SK-N-SH (cell line): ENCODE measurements at regions of chr19 and their contacts with region 1.

Region 1: GRCh38 chr19:1672038-1672768 is 19.8 kb upstream of the TCF3 start:
- DNase-seq: peak; percentile 86
- H3K4me3 ChIP-seq: peak overlapping the region in 1 of 2 experiments; percentile 48; a peak in 1 of 4 replicates
- H3K27ac ChIP-seq: no peak overlapping the region
- H3K4me1 ChIP-seq: peaks cover 0 to 5% of the 10 kb centered on the region in 2 experiments; a peak in 2 of 4 replicates
- H3K27me3 ChIP-seq: peaks cover 59% of the 10 kb centered on the region
- CTCF ChIP-seq: peak; percentile 92
- EP300 ChIP-seq: no peak
- RAD21 ChIP-seq: peak; percentile 74

Region 2: DNA sequence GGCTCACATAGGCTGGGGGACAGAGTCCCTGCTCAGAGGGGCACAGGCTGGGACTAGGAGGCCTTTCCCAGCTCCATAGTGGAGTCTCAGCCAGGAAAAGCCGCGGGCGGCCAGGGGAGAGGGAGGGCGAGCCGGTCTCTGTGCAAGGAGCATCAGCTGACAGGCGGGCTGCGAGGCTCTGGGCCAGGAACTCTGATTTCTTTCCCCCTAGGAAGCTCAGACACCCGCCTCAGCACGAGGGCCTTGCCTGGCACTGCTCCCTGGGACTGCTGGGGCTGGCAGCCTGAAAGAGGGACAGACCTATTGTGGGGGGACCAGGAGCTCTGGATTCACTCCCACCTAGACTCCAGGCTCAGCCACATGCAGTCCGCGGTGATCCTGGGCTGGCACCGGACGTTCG is 150.6 kb before region 1 on chr19:
- CTCF ChIA-PET with region 1: no interaction called
- POLR2A ChIA-PET with region 1: no interaction called
- DNase-seq: no peak
- H3K4me3 ChIP-seq: no peak overlapping the region
- H3K27ac ChIP-seq: no peak overlapping the region
- H3K4me1 ChIP-seq: no peaks in the 10 kb centered on the region
- H3K27me3 ChIP-seq: peaks cover 38% of the 10 kb centered on the region
- CTCF ChIP-seq: no peak
- EP300 ChIP-seq: no peak
- RAD21 ChIP-seq: no peak

Region 3: GRCh38 chr19:1576242-1577089 is 95.7 kb before region 1 on chr19:
- CTCF ChIA-PET with region 1: no interaction called
- POLR2A ChIA-PET with region 1: no interaction called
- DNase-seq: no peak
- H3K4me3 ChIP-seq: no peak overlapping the region
- H3K27ac ChIP-seq: no peak overlapping the region
- H3K4me1 ChIP-seq: no peaks in the 10 kb centered on the region
- H3K27me3 ChIP-seq: no peaks in the 10 kb centered on the region
- CTCF ChIP-seq: no peak
- EP300 ChIP-seq: no peak
- RAD21 ChIP-seq: no peak

Region 4: GRCh38 chr19:1605236-1606137 is 66.7 kb before region 1 on chr19 and contains the start of gene UQCR11:
- CTCF ChIA-PET with region 1: interaction called, 17 read pairs
- POLR2A ChIA-PET with region 1: no interaction called
- DNase-seq: peak; percentile 100
- H3K4me3 ChIP-seq: peak within 1 kb of the TSS; percentile 73 to 99
- H3K27ac ChIP-seq: peak within 1 kb of the TSS; percentile 76 to 94
- H3K4me1 ChIP-seq: peaks cover 5 to 9% of the 10 kb centered on the region in 2 experiments; a peak in 2 of 4 replicates
- H3K27me3 ChIP-seq: no peaks in the 10 kb centered on the region
- CTCF ChIP-seq: peak; percentile 63
- EP300 ChIP-seq: no peak
- RAD21 ChIP-seq: peak; percentile 73
- polyA plus RNA-seq, gene UQCR11: 247 and 372 TPM in 2 replicates

Region 5: DNA sequence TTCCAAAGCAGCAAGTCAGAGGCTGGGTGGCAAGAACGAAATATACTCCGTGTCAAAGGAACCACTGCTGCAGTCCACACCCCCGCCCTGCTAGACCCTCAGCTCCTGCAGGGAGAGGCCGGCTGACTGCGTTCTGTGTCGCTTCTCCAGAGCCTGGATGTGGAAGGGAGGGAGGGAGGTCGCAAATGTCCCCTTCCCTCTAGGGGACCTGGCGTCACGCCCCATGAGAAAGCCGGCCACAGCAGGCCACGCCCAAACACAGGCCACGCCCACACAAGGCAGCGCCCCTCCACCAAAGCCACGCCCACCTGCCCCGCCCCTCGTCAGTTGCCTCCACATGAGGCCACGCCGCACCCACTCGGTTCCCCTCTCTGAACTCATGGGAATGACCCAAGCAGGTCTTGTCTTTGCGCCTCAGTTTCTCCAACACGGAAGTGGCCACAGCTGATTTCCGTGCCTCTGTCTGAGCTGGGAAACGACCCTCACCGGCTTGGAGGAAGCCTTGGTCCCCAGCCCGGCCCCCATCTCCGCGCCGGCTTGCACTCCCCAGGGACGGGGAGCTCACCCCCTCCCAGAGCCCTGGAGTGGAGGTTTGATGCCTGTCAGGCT is 18.6 kb after region 1 on chr19:
- CTCF ChIA-PET with region 1: interaction called, 13 read pairs
- POLR2A ChIA-PET with region 1: no interaction called
- DNase-seq: peak; percentile 90
- H3K4me3 ChIP-seq: no peak overlapping the region
- H3K27ac ChIP-seq: no peak overlapping the region
- H3K4me1 ChIP-seq: no peaks in the 10 kb centered on the region
- H3K27me3 ChIP-seq: peaks cover 90% of the 10 kb centered on the region
- CTCF ChIP-seq: no peak
- EP300 ChIP-seq: no peak
- RAD21 ChIP-seq: no peak

Region 6: DNA sequence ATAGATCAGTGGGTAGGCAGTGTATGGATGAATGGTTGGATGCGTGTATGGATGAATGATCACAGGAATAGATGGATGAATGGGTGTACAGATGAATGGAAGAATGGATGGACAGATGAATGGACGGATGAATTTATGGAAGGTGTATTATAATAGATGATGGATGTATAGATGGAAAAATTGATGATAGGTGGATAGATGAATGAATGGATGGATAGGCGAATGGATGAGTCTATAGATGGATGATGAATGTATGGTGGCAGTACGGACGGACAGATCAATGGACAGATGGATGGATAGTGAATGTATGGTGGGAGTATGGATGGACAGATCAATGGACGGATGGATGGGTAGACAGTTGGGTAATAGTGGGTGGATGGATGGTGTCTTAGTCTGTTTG is 32.1 kb after region 1 on chr19:
- CTCF ChIA-PET with region 1: no interaction called
- POLR2A ChIA-PET with region 1: no interaction called
- DNase-seq: no peak
- H3K4me3 ChIP-seq: no peak overlapping the region
- H3K27ac ChIP-seq: no peak overlapping the region
- H3K4me1 ChIP-seq: no peaks in the 10 kb centered on the region
- H3K27me3 ChIP-seq: peaks cover 53% of the 10 kb centered on the region
- CTCF ChIP-seq: no peak
- EP300 ChIP-seq: no peak
- RAD21 ChIP-seq: no peak

Region 7: DNA sequence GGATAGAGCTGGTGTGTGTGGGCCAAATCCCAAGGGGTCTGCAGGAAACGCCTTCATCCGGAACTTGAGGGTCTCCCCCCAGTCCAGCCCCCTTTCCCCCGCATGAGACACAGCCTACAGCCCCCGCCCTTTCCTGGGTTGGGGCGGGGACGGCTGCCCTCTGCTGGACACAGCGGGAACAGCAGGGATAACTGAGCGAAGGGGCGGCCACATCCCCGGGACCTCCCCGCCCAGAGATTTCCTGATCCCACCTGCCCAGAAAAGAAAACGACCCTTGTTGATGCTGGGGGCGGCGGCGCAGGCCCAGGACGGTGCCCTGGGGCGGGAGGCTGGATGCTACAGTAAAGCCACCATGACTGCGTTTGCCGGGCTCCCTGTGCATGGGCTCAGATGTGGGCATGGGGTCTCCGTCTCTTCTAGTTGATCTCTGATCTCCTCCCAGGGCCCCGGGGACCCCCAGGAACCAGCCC is 95.3 kb after region 1 on chr19:
- CTCF ChIA-PET with region 1: interaction called, 128 read pairs
- POLR2A ChIA-PET with region 1: no interaction called
- DNase-seq: peak; percentile 96
- H3K4me3 ChIP-seq: no peak overlapping the region
- H3K27ac ChIP-seq: no peak overlapping the region
- H3K4me1 ChIP-seq: no peaks in the 10 kb centered on the region
- H3K27me3 ChIP-seq: peaks cover 61% of the 10 kb centered on the region
- CTCF ChIP-seq: peak; percentile 92
- EP300 ChIP-seq: no peak
- RAD21 ChIP-seq: peak; percentile 69

Region 8: DNA sequence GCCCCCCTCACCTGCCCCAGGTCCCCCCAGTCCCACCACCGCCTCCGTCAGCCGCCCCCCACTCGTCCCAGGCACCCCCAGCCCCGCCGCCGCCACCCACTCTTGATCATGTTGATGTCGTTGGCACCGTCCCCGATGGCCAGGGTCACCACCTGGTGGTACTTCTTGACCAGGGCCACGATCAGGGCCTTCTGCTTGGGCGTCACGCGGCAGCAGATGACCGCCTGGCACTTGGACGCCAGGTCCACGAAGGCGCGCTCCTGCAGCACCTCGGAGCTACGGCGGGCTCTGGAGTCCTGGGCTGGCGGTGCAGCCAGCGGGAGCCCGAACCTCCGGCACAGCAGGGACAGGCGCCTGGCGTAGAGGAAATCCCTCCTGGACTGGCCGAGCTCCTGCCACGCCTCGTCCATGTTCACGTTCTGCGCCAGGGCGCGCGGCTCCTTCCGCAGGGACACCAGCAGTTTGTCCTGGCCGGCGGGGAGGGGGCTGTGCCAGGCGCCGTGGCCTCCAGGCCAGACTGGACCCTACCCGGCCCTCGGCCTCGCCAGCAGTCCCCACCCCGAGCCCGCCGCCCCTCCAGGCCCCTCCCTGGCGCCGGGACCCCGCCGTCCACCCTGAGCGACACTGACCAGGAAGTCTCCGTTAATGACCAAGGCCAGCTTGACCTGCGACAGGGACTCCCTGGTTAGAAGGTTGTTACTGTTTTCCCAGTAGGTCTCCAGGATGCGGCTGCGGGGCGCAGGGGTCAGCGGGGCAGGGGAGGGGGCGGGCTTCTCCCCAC is 117.2 kb after region 1 on chr19:
- CTCF ChIA-PET with region 1: interaction called, 46 read pairs
- POLR2A ChIA-PET with region 1: interaction called, 3 read pairs
- DNase-seq: peak; percentile 67
- H3K4me3 ChIP-seq: no peak overlapping the region; a peak in 1 of 4 replicates
- H3K27ac ChIP-seq: no peak overlapping the region
- H3K4me1 ChIP-seq: no peaks in the 10 kb centered on the region; a peak in 1 of 4 replicates
- H3K27me3 ChIP-seq: peaks cover 23% of the 10 kb centered on the region
- CTCF ChIP-seq: no peak
- EP300 ChIP-seq: no peak
- RAD21 ChIP-seq: no peak

Region 9: GRCh38 chr19:1837625-1838105 is 165.5 kb after region 1 on chr19:
- CTCF ChIA-PET with region 1: interaction called, 10 read pairs
- POLR2A ChIA-PET with region 1: no interaction called
- DNase-seq: peak; percentile 95
- H3K4me3 ChIP-seq: no peak overlapping the region; a peak in 1 of 4 replicates
- H3K27ac ChIP-seq: no peak overlapping the region; a peak in 1 of 4 replicates
- H3K4me1 ChIP-seq: peaks cover 0 to 12% of the 10 kb centered on the region in 2 experiments; a peak in 1 of 4 replicates
- H3K27me3 ChIP-seq: no peaks in the 10 kb centered on the region
- CTCF ChIP-seq: peak; percentile 94
- EP300 ChIP-seq: no peak
- RAD21 ChIP-seq: peak; percentile 50